Vagina (tissue), 2 donors: ENCODE measurements at regions of chr14 and their contacts with region 1.

Region 1: GRCh38 chr14:33972583-33973081 is 21.8 kb upstream of the EGLN3 start:
- DNase-seq: no peak
- H3K4me3 ChIP-seq: no peak overlapping the region
- H3K27ac ChIP-seq: no peak overlapping the region
- H3K4me1 ChIP-seq: no peaks in the 10 kb centered on the region
- H3K27me3 ChIP-seq: no peaks in the 10 kb centered on the region
- CTCF ChIP-seq: no peak
- POLR2A ChIP-seq: no peak

Region 2: DNA sequence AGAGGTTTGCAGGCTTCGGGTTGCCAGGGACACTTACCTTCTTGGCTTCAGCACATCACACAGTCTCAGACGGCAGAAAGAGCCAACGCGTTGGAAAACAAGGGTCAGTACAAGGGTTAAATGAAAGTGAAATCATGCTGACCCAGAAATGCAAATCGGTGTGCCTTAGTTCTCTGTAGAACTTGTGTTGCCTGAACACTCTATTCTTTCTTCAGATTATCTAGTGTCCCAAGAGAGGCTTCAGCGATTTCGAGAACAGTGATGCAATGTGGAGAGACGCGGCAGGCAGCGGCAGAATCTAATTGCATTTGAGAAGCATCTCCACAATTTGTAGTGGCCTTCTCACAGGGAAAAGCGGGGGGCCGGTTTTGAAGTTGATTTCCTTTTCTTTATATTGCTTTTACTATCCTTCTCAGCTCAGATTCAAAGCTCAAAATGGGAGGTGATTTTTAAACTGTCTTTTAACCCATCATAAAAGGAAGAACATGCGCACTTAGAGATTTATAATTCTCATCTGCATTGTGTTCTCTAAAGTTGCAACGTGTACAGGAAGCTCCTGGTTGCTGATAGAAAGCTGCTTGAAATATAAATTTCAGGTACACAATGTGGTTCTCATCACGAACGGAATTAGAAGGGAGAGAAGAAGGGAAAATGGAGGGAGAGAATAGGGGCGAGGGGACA is 46.1 kb after region 1 on chr14:
- intact Hi-C with region 1: no loop called
- DNase-seq: no peak
- H3K4me3 ChIP-seq: no peak overlapping the region
- H3K27ac ChIP-seq: no peak overlapping the region
- H3K4me1 ChIP-seq: no peaks in the 10 kb centered on the region
- H3K27me3 ChIP-seq: no peaks in the 10 kb centered on the region
- CTCF ChIP-seq: no peak
- POLR2A ChIP-seq: no peak

Region 3: DNA sequence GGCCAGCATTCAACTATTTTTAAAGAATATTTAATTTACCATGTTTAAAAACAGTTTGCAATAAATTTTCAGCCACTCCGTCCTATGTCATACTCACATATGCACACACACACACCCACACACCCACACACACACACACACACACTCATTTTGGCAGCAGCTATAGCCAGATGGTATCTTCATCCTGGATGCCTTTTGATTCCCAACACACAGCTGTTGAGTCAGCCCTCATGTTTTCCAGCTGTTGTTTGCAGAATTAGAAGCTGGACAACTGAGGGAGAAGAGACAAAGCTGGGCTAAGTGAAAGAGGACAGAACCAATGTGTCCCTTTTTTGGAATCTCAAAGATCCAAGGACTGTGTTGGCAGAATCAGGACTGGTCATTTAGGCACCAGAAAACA is 58.2 kb after region 1 on chr14:
- intact Hi-C with region 1: loop called (anchors 10 kb)
- DNase-seq: no peak
- H3K4me3 ChIP-seq: no peak overlapping the region
- H3K27ac ChIP-seq: peak overlapping the region; percentile 10
- H3K4me1 ChIP-seq: peaks cover 20% of the 10 kb centered on the region
- H3K27me3 ChIP-seq: no peaks in the 10 kb centered on the region
- CTCF ChIP-seq: no peak
- POLR2A ChIP-seq: no peak